ENCODE measurements at regions of chr17 and their contacts with region 1.

Region 1: DNA sequence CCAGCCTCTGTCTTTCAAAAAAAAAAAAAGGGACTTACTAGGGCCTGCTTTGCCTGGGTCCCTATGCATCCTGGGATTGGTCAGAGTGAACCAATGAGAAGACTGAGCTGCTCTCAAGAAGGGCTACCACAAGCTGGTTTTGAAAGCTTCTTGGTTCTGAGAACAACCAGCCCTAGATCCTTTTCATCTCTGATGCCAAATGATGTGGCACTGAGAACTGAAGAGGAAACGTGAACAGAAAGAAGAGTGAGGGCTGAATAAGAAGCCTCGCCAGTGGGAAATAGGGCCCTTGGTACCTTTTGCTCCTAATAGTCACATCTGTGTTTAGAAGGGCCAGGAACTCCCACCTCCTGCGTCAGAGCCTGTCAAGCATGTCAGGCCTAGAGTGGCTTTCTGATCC is 10.7 kb downstream of the TACO1 start:
- DNase-seq: no peak
- ATAC-seq: peak in 1 of 2 experiments; percentile 29; a peak in 1 of 6 replicates
- H3K4me3 ChIP-seq: no peak overlapping the region
- H3K27ac ChIP-seq: no peak overlapping the region
- H3K4me1 ChIP-seq: no peaks in the 10 kb centered on the region
- CTCF ChIP-seq: no peak
- EP300 ChIP-seq: no peak
- POLR2A ChIP-seq: no peak
- RAD21 ChIP-seq: no peak

Region 2: GRCh38 chr17:63425482-63425881 is 185.9 kb before region 1 on chr17:
- CTCF ChIA-PET with region 1: interaction called, 336 read pairs
- POLR2A ChIA-PET with region 1: interaction called, 4 read pairs
- DNase-seq: peak; percentile 83 to 86
- ATAC-seq: peak; percentile 63 to 93
- H3K4me3 ChIP-seq: no peak overlapping the region
- H3K27ac ChIP-seq: no peak overlapping the region
- H3K4me1 ChIP-seq: no peaks in the 10 kb centered on the region
- CTCF ChIP-seq: peak; percentile 99
- EP300 ChIP-seq: no peak
- POLR2A ChIP-seq: no peak
- RAD21 ChIP-seq: peak; percentile 97 to 99

Region 3: DNA sequence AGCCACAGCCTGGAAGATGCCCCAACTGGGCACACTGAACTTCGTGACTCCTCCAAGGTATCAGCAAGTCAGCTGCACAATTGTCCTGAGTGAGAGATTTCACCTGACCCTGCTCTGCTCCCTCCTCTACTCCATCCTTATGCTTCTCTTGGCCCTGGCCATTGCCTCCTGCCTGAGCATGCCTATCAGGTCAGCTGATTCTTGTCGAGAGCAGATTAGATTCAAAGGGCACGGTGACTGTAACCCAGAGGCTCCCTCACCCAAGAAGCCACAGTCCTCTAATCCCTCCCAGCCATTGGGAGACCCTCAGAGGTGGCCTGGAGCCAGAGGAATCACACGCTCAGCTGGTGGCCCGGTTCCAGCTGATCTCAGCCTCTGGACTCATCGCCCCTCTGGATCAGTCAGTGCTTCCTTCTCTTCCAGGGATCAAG is 158.3 kb before region 1 on chr17:
- CTCF ChIA-PET with region 1: interaction called, 18 read pairs
- POLR2A ChIA-PET with region 1: interaction called, 4 read pairs
- DNase-seq: no peak
- ATAC-seq: peak in 1 of 2 experiments; percentile 11; a peak in 2 of 6 replicates
- H3K4me3 ChIP-seq: no peak overlapping the region
- H3K27ac ChIP-seq: no peak overlapping the region
- H3K4me1 ChIP-seq: no peaks in the 10 kb centered on the region
- CTCF ChIP-seq: no peak
- EP300 ChIP-seq: no peak
- POLR2A ChIP-seq: no peak
- RAD21 ChIP-seq: no peak

Region 4: DNA sequence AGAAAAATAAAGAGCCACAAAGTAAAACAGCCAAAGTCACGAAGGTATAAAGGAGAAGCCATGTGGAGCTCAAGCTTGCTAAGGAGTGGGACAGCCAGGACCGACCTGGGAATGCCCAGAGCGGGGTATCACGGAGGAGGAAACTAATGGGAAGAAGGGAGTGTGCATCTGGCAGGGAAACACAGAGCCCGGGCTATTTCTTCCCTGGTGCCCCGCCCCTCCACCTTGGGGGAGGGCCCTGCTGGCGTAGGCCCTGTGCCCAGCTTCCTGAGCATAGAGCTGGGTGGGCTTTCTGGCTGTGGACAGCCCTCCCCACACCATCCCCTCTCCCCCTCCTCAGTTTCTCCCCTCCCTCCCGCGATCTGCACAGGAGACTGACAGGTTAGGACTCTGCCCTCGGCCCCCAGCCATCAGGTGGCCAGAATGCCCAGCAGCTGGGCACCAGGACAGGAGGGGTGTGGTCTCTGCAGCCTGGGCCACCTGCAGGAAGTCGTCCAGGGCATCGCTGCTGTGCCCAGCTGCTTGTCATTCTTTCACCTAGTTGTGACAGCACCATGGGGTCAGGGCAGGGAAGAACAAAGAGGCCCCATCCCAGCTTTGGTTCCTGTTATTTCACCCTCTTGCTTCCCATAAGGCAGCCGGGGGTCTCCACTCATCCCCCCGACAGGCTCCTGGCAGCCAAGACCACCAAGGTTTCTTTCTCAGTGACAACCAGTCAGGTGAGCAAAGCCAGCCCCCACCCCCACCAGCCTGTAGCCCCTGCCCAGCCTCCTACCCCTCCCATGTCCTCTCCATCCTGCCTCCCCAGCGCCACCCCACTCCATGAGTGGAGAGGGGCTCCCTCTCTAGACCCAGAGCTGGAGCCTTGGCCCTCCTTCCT is 68.2 kb before region 1 on chr17:
- CTCF ChIA-PET with region 1: interaction called, 16 read pairs
- POLR2A ChIA-PET with region 1: no interaction called
- DNase-seq: no peak
- ATAC-seq: peak in 1 of 2 experiments; percentile 35; a peak in 3 of 6 replicates
- H3K4me3 ChIP-seq: no peak overlapping the region
- H3K27ac ChIP-seq: no peak overlapping the region
- H3K4me1 ChIP-seq: no peaks in the 10 kb centered on the region
- CTCF ChIP-seq: no peak
- EP300 ChIP-seq: no peak
- POLR2A ChIP-seq: no peak
- RAD21 ChIP-seq: no peak

Region 5: DNA sequence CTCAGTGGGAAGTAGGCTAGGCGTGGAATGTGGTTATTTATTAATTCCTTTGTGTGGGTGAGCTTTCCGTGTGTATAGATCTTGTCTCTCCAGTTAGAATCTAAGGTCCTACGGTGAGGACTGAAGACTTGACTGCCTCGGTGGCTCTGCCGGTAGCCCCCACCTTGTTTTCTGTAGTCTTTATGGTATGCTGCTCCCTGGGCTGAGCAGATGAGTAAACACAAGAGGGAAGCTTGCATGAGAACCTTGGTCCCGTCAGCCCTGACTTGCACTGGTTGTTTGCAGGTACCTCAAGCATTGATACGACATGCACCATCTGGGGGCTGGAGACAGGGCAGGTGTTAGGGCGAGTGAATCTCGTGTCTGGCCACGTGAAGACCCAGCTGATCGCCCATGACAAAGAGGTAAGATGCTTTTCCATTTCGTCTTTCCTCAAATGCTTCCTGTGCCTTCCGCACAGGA is 31.8 kb before region 1 on chr17:
- CTCF ChIA-PET with region 1: interaction called, 33 read pairs
- POLR2A ChIA-PET with region 1: no interaction called
- DNase-seq: no peak
- ATAC-seq: no peak
- H3K4me3 ChIP-seq: no peak overlapping the region
- H3K27ac ChIP-seq: no peak overlapping the region
- H3K4me1 ChIP-seq: no peaks in the 10 kb centered on the region
- CTCF ChIP-seq: no peak
- EP300 ChIP-seq: no peak
- POLR2A ChIP-seq: no peak
- RAD21 ChIP-seq: no peak

Region 6: GRCh38 chr17:63621766-63622519 is 10.6 kb after region 1 on chr17 and contains the start of gene MAP3K3:
- CTCF ChIA-PET with region 1: interaction called, 64 read pairs
- POLR2A ChIA-PET with region 1: interaction called, 8 read pairs
- DNase-seq: peak; percentile 100
- ATAC-seq: peak; percentile 88 to 96
- H3K4me3 ChIP-seq: peak within 1 kb of the TSS; percentile 92
- H3K27ac ChIP-seq: peak within 1 kb of the TSS; percentile 82 to 95
- H3K4me1 ChIP-seq: peaks cover 13% of the 10 kb centered on the region
- CTCF ChIP-seq: no peak
- EP300 ChIP-seq: no peak
- POLR2A ChIP-seq: peak; percentile 90
- RAD21 ChIP-seq: no peak
- polyA plus RNA-seq, gene MAP3K3: 10.8 and 12.6 TPM in 2 replicates